ENCODE measurements at regions of chr4 and their contacts with region 1.

Region 1: DNA sequence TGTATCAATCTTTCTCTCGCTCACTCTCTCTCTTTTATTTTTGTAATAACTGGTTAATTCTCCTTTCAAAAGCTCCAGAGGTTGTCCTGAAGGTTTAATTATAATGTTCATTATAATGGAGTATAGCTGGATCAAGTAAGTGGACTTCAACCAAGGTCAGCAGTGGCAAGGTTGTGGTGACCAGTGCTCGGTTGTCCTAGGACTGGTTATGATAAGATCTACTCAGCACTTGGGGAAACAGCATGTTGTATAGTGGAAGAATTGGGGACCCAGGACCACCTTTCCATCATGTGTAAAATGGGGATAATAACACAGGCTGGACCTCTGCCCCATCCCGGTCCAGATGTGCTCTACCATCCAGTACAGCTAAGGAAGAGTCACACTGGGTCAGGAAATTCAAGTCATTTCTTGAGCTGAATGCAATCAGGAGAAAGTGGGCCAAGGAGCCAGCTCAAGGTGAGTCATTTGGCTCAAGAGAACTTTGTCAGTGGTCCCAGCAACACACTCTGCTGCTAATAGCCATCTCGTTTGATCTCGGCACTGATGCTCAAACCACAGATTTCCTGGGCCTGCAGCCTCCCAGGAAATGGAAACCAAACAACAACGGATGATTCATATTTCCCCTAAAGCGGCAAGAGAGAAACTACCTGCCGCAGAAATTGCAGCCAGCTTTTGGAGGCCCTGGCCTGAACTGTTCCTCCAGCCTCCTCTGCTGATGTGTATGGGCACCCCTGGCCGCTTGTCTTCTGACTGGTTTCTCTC is 123.6 kb upstream of the RBPJ start:
- DNase-seq: peak; percentile 80
- ATAC-seq: peak; percentile 75
- H3K4me3 Mint-ChIP-seq: peak overlapping the region; percentile 52
- H3K27ac Mint-ChIP-seq: peak overlapping the region; percentile 91
- H3K4me1 Mint-ChIP-seq: peaks cover 68% of the 10 kb centered on the region
- H3K27me3 Mint-ChIP-seq: peaks cover 2% of the 10 kb centered on the region

Region 2: DNA sequence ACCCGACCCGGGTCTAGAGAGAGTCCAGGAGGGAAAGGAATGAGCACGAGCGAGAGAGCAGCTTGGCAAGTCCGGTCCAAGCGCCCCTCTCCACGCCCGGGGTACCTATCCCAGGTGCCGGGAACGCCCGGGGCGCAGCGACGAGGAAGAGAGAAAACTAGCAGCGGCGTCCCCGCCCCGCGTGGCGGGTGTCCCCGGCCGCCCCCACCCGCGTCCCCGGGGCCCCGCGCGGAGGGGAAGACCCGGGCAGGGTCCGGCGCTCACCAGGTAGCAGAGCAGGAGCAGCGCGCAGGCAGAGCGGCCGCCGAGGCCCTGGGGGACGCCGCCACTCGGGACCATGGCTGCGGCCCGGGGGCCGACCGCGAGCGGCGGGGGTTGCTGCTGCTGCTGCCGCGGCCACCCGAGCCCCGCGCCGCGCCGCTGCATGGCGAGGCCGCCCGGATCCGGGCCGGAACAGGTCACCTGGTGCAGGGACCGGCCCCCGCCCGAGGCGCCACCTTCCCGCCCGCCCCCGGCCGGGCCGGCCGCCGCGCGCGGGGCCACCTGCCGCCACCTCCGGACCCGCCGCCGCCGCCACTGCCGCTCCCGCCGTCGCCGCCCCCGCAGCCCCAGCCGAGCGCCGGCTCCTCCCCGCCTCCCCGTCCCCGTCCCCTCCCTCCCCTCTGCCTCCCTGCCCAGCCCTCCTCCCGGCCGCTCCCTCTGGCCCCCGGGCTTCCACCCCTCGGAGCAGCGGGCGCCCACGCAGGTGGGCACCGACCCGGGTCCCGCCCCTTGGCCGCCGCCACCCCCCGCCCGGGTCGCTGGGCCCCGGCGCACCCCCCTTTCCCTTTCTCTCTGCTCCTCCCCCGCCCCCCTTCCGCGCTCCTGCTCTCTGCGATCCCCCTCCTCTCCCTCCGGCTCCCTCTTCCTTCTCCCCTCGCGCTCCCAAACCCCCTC is 334.5 kb before region 1 on chr4 and contains the start of gene SEL1L3:
- CTCF ChIA-PET with region 1: no interaction called
- POLR2A ChIA-PET with region 1: no interaction called
- intact Hi-C with region 1: loop called in 1 of 2 experiments (anchors 10 kb)
- DNase-seq: peak; percentile 79
- ATAC-seq: peak; percentile 33
- H3K4me3 Mint-ChIP-seq: peak within 1 kb of the TSS; percentile 94
- H3K27ac Mint-ChIP-seq: peak within 1 kb of the TSS; percentile 96
- H3K4me1 Mint-ChIP-seq: peaks cover 40% of the 10 kb centered on the region
- H3K27me3 Mint-ChIP-seq: no peaks in the 10 kb centered on the region
- total RNA-seq, gene SEL1L3: 31.9 to 34.8 TPM

Region 3: GRCh38 chr4:25913851-25914669 is 283.1 kb before region 1 on chr4 and contains the start of gene SMIM20:
- CTCF ChIA-PET with region 1: no interaction called
- POLR2A ChIA-PET with region 1: no interaction called
- intact Hi-C with region 1: no loop called
- DNase-seq: peak; percentile 94
- ATAC-seq: peak; percentile 96
- H3K4me3 Mint-ChIP-seq: peak within 1 kb of the TSS; percentile 93
- H3K27ac Mint-ChIP-seq: peak within 1 kb of the TSS; percentile 93
- H3K4me1 Mint-ChIP-seq: peaks cover 22% of the 10 kb centered on the region
- H3K27me3 Mint-ChIP-seq: no peaks in the 10 kb centered on the region
- total RNA-seq, gene SMIM20: 15.6 to 23.0 TPM

Region 4: DNA sequence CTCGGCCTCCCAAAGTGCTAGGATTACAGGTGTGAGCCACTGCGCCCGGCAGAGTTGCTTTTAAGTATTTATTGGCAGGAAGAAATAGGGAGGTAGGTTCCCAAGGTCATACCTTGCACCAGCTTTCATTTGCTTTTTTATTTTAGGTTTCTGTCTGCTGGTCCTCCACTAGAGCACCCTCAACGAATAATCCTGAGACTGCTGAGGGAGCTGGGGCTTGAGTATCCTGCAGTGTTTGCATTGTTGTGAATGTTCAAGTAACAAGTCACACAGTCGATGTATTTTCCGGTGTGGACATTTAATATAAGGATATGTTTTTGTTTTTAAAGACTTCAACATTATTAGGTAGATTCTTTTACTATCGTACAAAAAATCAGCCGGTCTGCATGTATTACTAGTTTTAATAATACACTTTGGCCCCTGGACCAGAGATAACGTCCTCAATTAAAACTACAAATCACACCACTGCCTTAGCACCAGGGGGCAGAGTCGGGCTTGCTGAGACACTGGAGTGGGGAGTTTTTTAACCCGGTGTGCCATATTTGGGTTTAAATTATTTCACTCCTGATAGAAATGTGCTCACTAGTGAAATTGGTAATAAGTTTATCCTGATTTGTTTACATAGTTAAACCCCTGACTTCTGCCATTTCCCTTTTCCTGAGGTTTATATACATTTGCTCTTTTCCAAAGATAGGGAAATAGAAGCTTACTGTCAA is 271.6 kb before region 1 on chr4:
- CTCF ChIA-PET with region 1: no interaction called
- POLR2A ChIA-PET with region 1: no interaction called
- intact Hi-C with region 1: no loop called
- DNase-seq: peak; percentile 65
- ATAC-seq: peak; percentile 57
- H3K4me3 Mint-ChIP-seq: no peak overlapping the region
- H3K27ac Mint-ChIP-seq: no peak overlapping the region
- H3K4me1 Mint-ChIP-seq: no peaks in the 10 kb centered on the region
- H3K27me3 Mint-ChIP-seq: no peaks in the 10 kb centered on the region

Region 5: DNA sequence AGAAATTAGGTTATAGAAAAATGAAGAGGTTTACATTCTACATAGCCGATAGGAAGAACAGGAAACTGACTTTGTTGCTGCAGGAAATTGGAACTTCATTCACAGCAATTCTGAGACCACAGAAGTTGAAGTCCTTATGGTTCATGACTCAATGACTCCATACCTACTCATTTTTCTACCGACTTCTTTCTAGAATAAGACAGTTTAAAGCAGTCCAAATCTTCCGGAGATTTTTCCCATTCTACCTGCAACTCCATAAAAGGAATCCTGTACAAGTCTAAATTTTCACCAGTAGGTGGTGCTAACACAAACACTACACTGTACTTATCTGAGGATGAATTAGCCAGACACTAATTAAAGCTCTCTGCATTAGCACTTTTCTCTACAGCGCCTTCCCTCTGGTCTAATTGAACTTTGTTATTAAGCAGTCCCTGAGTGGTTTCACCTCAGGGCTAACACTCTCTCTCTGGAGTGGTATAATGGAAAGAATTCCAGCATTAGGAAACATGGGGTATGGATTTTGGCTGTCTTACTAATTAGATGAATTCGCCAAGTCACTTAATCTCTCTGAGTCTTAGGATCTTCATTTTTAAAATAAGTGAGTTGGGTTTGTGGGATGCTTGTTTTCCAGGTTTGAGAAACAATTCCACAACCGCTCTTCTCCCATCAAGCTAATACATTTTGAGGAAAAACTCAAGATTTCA is 115.3 kb before region 1 on chr4:
- CTCF ChIA-PET with region 1: interaction called, 7 read pairs
- POLR2A ChIA-PET with region 1: interaction called, 17 read pairs
- intact Hi-C with region 1: loop called in 1 of 2 experiments (anchors 1 kb)
- DNase-seq: no peak
- ATAC-seq: peak; percentile 61
- H3K4me3 Mint-ChIP-seq: no peak overlapping the region
- H3K27ac Mint-ChIP-seq: peak overlapping the region; percentile 74
- H3K4me1 Mint-ChIP-seq: peaks cover 71% of the 10 kb centered on the region
- H3K27me3 Mint-ChIP-seq: peaks cover 19% of the 10 kb centered on the region

Region 6: DNA sequence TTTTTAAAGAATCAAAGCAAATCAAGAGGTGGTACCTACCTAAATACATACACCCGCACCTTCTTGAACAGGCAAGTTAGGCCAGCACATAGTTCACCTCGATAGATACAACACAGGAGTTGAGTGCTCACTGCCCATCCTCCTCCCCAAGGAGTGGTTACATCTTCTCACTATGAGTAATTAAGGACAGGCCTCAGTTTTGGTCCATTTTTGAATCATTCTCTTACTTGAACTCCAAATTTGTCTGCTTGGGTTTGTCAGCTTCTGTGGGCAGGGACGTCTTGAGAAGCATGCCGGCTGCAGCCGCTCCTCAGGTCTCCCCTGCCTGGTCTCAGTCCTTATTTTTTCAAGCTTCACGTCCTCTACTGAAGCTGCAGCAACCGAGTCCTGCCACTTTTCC is 67.0 kb before region 1 on chr4:
- CTCF ChIA-PET with region 1: no interaction called
- POLR2A ChIA-PET with region 1: interaction called, 4 read pairs
- intact Hi-C with region 1: loop called in 1 of 2 experiments (anchors 5 kb)
- DNase-seq: peak; percentile 39
- ATAC-seq: peak; percentile 68
- H3K4me3 Mint-ChIP-seq: no peak overlapping the region
- H3K27ac Mint-ChIP-seq: peak overlapping the region; percentile 27
- H3K4me1 Mint-ChIP-seq: peaks cover 47% of the 10 kb centered on the region
- H3K27me3 Mint-ChIP-seq: peaks cover 2% of the 10 kb centered on the region

Region 7: DNA sequence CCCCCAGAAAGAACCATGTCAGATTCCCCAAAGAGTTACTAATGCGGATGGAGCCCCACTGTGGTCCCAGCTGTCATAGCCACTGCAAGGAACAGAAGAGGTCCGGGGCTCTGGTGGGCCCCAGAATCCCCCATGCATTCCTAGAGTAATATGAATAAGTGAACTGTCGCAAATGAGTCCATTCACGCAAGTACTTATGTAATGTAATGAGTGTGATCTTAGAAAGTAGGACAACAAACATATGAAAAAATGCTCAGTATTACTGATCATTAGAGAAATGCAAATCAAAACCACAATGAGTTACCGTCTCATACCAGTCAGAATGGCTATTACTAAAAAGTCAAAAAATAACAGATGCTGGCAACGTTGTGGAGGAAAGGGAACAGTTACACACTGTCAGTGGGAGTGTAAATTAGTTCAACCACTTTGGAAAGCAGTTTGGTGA is 17.9 kb before region 1 on chr4:
- CTCF ChIA-PET with region 1: interaction called, 5 read pairs
- POLR2A ChIA-PET with region 1: interaction called, 4 read pairs
- intact Hi-C with region 1: loop called (anchors 1 to 2 kb)
- DNase-seq: peak; percentile 48
- ATAC-seq: peak; percentile 67
- H3K4me3 Mint-ChIP-seq: no peak overlapping the region
- H3K27ac Mint-ChIP-seq: peak overlapping the region; percentile 55
- H3K4me1 Mint-ChIP-seq: peaks cover 17% of the 10 kb centered on the region
- H3K27me3 Mint-ChIP-seq: no peaks in the 10 kb centered on the region